ENCODE measurements at regions of chr7 and their contacts with region 1.

Region 1: DNA sequence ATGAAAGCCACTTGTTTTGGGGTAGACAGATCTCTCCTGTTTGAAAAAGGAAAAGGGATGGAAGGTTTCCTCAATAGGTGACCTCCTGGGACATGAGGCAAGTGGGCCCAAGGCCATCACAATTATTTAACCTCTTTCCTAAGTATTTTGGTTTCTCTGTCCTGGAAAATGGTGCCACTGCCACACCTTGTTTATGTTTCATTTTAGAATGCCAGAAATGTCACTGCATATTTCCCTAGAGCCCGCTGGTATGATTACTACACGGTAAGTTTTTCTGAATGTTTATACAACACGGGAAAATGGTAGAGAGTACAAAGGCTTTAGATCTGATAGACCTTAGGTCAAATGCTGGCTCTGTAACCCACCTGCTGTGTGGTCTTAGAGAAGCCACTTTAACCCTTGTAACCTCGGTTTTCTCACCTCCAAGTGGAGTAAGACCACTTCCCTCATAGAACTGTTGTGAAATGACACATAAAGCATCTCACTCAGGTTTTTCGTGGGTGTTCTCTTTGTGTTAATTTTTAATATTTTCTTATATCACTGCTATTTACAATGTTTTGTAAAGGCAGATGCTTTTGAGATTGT is 14.0 kb upstream of the MGAM2 start:
- DNase-seq: no peak
- ATAC-seq: no peak
- H3K4me3 ChIP-seq: no peak overlapping the region
- H3K4me3 Mint-ChIP-seq: no peak overlapping the region
- H3K27ac ChIP-seq: no peak overlapping the region
- H3K27ac Mint-ChIP-seq: no peak overlapping the region
- H3K4me1 ChIP-seq: no peaks in the 10 kb centered on the region
- H3K4me1 Mint-ChIP-seq: no peaks in the 10 kb centered on the region
- H3K27me3 ChIP-seq: no peaks in the 10 kb centered on the region
- H3K27me3 Mint-ChIP-seq: no peaks in the 10 kb centered on the region
- CTCF ChIP-seq: no peak

Region 2: GRCh38 chr7:142060936-142061335 is 36.5 kb before region 1 on chr7:
- CTCF ChIA-PET with region 1: interaction called, 7 read pairs
- POLR2A ChIA-PET with region 1: no interaction called
- intact Hi-C with region 1: loop called in 1 of 2 experiments (anchors 1 kb)
- DNase-seq: no peak
- ATAC-seq: no peak
- H3K4me3 ChIP-seq: no peak overlapping the region
- H3K4me3 Mint-ChIP-seq: no peak overlapping the region
- H3K27ac ChIP-seq: no peak overlapping the region
- H3K27ac Mint-ChIP-seq: no peak overlapping the region
- H3K4me1 ChIP-seq: no peaks in the 10 kb centered on the region
- H3K4me1 Mint-ChIP-seq: no peaks in the 10 kb centered on the region
- H3K27me3 ChIP-seq: no peaks in the 10 kb centered on the region
- H3K27me3 Mint-ChIP-seq: peaks cover 3% of the 10 kb centered on the region
- CTCF ChIP-seq: no peak

Measured in CD8-positive, alpha-beta T cell (primary cell).